AG04449 (cell line): ENCODE measurements at regions of chr11 and their contacts with region 1.

Region 1: DNA sequence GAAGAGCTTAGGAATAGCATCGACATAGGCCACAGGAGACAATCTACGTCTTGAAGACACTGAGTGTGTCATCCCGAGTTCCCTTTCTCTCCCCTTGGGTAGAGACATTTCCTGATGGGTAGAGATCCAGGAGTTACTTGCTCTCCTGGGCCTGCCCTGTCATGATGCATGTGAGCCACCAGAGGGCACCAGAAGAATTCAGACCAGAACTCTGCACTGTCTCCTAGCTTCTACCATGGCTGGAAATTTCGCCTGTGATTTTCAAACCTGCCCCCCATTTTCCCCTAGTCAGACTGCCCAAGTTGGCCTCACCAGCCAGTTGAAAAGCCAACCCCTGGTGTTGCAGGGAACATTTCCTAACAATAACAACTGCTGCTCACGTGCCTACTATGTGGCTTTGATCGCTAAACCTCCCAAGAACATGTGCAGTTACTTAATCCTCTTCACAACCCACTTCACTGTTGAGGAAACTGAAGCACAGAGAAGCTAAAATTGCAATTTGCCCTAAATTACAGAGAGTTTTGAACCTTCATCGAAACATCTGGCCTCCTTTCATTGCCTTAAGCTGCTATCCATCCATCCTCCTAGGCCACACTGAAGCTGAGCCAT is 47.2 kb downstream of the C11orf58 start:
- DNase-seq: no peak
- H3K4me3 ChIP-seq: no peak overlapping the region
- CTCF ChIP-seq: peak; percentile 91

Region 2: GRCh38 chr11:16759857-16760256 is 25.8 kb before region 1 on chr11:
- CTCF ChIA-PET with region 1: interaction called, 63 read pairs
- POLR2A ChIA-PET with region 1: no interaction called
- DNase-seq: no peak
- H3K4me3 ChIP-seq: no peak overlapping the region
- CTCF ChIP-seq: no peak

Region 3: GRCh38 chr11:16796311-16796710 is 10.7 kb after region 1 on chr11:
- CTCF ChIA-PET with region 1: interaction called, 26 read pairs
- POLR2A ChIA-PET with region 1: no interaction called
- DNase-seq: no peak
- H3K4me3 ChIP-seq: no peak overlapping the region
- CTCF ChIP-seq: no peak

Region 4: DNA sequence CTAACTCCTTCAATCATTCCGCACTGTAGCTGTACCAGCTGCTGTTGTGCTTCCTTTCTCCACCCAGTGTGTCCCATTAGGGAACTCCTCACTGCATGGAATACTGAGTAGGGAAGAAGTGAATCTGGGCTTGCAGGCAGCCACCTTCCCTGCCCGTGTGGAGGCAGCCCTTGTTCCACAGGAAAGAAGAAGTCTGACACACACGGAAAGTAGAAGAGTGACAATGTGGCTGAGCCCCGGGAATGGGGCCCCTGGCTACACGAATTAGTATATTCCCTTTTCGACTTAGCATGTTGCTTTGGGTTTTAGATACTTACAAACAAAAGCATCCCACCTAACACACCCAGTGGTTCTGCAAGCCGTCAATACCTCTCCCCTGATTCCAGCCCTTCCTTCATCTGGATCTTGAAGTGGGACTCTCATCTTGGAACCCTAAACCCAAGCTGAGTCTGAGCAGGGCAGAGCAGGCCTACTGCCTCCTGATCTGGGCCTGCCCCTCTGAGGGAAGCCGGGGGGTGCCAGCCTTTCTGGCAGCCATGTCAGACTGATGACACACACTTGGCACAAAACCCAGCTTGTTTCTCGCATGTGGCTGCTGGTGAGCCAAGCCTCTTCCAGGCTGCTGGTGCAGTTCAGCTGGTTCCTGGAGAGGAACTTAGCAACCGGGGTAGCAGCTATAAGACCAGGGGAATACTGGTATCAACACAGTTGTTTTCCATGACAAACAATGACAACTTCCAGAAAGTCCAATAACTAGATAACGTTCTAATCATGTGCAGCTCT is 24.5 kb after region 1 on chr11:
- CTCF ChIA-PET with region 1: interaction called, 17 read pairs
- POLR2A ChIA-PET with region 1: no interaction called
- DNase-seq: no peak
- H3K4me3 ChIP-seq: no peak overlapping the region
- CTCF ChIP-seq: no peak

Region 5: GRCh38 chr11:16820324-16821092 is 34.9 kb after region 1 on chr11:
- CTCF ChIA-PET with region 1: interaction called, 28 read pairs
- POLR2A ChIA-PET with region 1: no interaction called
- DNase-seq: peak; percentile 12
- H3K4me3 ChIP-seq: no peak overlapping the region
- CTCF ChIP-seq: peak; percentile 80

Region 6: DNA sequence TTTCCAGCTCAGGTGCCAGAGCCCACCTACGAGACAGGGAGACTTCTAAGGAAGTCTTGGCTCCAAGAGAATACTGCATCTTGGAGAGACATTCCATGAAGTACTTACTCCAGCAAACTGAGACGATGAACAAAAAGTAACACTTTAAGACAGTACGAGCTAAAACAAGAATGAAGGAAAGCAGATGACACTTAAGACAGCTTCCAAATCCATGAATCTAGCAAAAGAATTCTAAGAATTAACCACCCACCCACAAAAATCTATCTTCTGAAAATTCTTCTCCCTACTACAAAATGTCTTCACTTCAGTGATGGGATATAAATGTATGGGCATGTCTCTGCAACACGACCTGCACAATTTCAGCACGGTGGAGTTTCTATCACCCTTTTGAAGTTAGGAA is 85.7 kb after region 1 on chr11:
- CTCF ChIA-PET with region 1: no interaction called
- POLR2A ChIA-PET with region 1: no interaction called
- DNase-seq: peak; percentile 1
- H3K4me3 ChIP-seq: no peak overlapping the region
- CTCF ChIP-seq: no peak

Region 7: DNA sequence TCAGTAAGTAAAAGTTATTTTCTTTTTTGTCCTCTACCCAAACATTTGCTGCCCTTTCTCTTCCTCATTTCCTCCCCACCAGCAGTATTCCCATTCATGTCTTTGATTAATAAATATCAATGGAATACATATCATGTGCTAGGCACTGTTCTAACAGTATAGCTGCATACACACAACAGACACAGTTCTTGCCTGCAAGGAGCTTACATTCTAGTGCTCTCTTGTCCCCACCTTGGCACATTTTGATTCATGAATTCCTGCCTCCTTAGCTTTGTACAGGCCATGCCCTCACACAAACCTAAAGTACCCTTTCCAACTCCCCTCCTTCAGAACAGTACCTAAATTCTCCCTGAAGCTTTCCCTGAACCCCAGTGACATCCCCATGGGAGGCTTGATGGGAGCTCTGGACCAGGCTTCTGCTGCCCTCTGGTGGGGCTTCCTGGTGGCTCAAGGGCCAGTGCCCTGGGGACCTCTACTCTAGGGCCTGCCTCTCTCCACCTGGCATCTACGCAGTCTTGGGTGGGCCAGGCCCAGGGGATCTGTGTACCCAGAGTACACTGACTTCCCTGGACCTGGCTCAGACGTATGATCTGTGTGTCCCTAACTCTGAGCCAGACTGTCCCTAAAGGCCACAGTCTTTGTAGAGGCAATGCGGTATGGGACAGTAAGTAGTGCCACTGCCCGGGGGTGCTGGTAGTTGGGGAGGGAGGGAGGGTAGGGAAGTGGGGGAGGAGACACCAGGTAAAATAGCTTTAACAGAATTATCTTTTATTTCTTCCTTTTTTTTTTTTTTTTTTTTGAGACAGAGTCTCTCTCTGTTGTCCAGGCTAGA is 277.8 kb after region 1 on chr11:
- CTCF ChIA-PET with region 1: interaction called, 196 read pairs
- POLR2A ChIA-PET with region 1: no interaction called
- DNase-seq: no peak
- H3K4me3 ChIP-seq: no peak overlapping the region
- CTCF ChIP-seq: peak; percentile 81

Region 8: GRCh38 chr11:17145972-17146371 is 360.3 kb after region 1 on chr11:
- CTCF ChIA-PET with region 1: no interaction called
- POLR2A ChIA-PET with region 1: no interaction called
- DNase-seq: no peak
- H3K4me3 ChIP-seq: no peak overlapping the region
- CTCF ChIP-seq: no peak